ENCODE measurements at regions of chr6 and their contacts with region 1.

Region 1: DNA sequence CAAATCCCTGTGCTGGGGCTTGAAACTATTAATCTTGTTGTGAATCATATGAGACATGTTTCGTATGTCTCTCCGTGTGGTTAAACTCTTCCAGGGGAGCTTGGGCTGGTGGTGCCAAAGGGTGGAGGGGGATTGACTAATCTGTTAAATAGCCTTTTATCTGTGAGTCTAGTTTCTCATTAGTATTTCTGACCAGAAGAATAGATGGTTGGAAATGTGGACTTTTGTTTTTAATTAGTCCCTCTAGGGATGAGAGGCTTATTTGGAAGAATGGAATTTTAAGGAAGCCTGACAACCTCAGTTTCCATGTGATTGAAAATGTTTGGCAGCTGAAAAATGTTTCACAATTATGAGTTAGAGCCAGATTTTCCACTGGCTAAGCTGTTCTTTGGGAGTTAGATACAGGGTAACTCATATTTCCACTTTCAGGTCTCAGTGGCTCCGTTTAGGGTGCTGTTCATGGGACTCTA is 117.3 kb downstream of the BCKDHB start:
- DNase-seq: no peak
- ATAC-seq: peak in 5 of 8 donors; percentile 53 to 88 (median 63)
- H3K4me3 ChIP-seq: no peak overlapping the region
- H3K27ac ChIP-seq: no peak overlapping the region
- H3K4me1 ChIP-seq: no peaks in the 10 kb centered on the region
- H3K27me3 ChIP-seq: no peaks in the 10 kb centered on the region
- CTCF ChIP-seq: no peak

Region 2: GRCh38 chr6:80197474-80197873 is 26.3 kb before region 1 on chr6:
- intact Hi-C with region 1: no loop called
- DNase-seq: peak in 1 of 2 donors; percentile 26
- ATAC-seq: peak in 7 of 8 donors; percentile 63 to 97 (median 96)
- H3K4me3 ChIP-seq: no peak overlapping the region
- H3K27ac ChIP-seq: peak overlapping the region in 2 of 10 donors; percentile 19 to 46
- H3K4me1 ChIP-seq: peaks cover 0 to 16% (median 0%) of the 10 kb centered on the region in 9 donors
- H3K27me3 ChIP-seq: no peaks in the 10 kb centered on the region
- CTCF ChIP-seq: no peak

Region 3: DNA sequence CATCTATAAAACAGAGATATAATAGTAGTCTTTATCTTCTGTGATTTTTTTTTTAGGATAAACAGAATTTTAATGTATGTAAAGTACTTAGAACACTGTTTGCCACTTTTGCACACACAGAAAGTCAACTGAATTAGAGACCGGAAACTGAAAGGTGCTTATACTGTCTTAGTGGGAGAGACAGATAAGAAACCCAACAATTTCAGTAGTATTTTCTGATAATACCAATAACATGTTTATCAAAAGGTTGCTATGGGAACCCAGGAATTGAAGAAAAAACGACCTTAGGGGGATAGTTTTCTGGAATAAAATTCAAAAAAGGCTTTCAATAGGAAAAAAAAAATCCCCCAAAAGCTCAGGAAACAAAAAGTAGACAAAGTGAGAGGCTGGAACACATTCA is 21.3 kb after region 1 on chr6:
- intact Hi-C with region 1: no loop called
- DNase-seq: no peak
- ATAC-seq: no peak
- H3K4me3 ChIP-seq: no peak overlapping the region
- H3K27ac ChIP-seq: no peak overlapping the region
- H3K4me1 ChIP-seq: peaks cover 0 to 28% (median 3%) of the 10 kb centered on the region in 9 donors
- H3K27me3 ChIP-seq: no peaks in the 10 kb centered on the region
- CTCF ChIP-seq: no peak

Region 4: DNA sequence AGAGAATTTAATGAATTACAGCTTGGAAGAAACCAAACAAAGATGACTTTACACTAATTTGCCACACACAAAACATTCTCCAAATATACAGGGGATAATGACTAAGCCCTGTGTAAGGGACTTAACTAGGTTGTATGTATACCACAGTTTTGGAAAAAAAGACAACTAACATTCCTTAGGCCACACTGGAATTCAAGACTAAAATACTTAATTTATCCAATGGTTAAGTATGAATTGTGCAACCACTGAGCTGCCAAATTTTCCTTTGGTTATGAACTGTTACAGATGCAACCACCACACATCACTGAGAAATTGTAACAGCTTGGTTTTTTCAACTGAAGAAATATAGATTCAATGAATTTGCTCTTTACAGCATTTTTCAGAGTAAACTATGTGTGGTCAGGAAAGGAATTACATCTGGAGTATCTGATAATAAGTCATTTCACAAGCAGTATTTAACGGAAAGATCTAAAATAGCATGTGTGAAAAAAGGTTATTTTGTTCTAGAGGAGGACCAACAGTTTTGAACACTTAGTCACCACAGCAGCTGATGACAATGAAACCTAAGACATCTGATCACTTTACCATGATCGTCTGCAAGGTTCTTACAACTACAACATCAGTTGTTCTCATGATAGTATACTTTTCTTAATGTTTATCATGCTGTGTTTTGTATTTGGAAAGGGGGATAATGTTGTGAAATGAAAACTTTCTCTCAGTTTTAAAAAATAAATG is 201.5 kb after region 1 on chr6:
- intact Hi-C with region 1: no loop called
- DNase-seq: no peak
- ATAC-seq: peak in 1 of 8 donors; percentile 25
- H3K4me3 ChIP-seq: no peak overlapping the region
- H3K27ac ChIP-seq: no peak overlapping the region
- H3K4me1 ChIP-seq: no peaks in the 10 kb centered on the region
- H3K27me3 ChIP-seq: no peaks in the 10 kb centered on the region
- CTCF ChIP-seq: peak in 1 of 9 donors; percentile 11

Region 5: DNA sequence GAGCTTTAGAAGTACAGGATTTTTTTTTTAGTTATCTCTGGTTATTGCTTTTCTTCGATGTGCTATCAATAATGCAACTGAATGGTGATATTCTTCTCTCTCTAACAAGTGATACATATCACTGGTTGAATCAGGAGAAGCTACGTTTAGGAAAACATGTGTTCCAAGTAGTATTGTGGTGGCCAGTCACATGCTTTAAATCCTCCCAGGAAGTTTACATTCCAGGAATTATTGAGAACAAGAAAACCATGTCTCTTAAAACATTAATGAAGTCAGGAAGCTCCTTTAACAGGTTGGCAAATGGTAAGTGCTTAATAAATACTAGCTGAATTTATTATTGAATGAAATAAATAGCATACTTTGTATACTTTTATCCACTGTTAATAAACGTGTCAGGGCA is 253.8 kb after region 1 on chr6:
- intact Hi-C with region 1: loop called in 1 of 10 experiments (anchors 10 kb)
- DNase-seq: no peak
- ATAC-seq: no peak
- H3K4me3 ChIP-seq: no peak overlapping the region
- H3K27ac ChIP-seq: no peak overlapping the region
- H3K4me1 ChIP-seq: no peaks in the 10 kb centered on the region
- H3K27me3 ChIP-seq: no peaks in the 10 kb centered on the region
- CTCF ChIP-seq: no peak

Measured in heart right ventricle (tissue), 16 donors.